Activated CD4-positive, alpha-beta T cell treated with anti-CD3 and anti-CD28 coated beads for 36 hours (primary cell): ENCODE measurements at regions of chr1 and their contacts with region 1.

Region 1: GRCh38 chr1:204806943-204807687 is 63.5 kb upstream of the NFASC start:
- DNase-seq: peak; percentile 92
- ATAC-seq: peak; percentile 96
- H3K4me3 Mint-ChIP-seq: peak overlapping the region; percentile 74
- H3K27ac Mint-ChIP-seq: peak overlapping the region; percentile 86
- H3K4me1 Mint-ChIP-seq: peaks cover 5% of the 10 kb centered on the region
- H3K27me3 Mint-ChIP-seq: no peaks in the 10 kb centered on the region

Region 2: DNA sequence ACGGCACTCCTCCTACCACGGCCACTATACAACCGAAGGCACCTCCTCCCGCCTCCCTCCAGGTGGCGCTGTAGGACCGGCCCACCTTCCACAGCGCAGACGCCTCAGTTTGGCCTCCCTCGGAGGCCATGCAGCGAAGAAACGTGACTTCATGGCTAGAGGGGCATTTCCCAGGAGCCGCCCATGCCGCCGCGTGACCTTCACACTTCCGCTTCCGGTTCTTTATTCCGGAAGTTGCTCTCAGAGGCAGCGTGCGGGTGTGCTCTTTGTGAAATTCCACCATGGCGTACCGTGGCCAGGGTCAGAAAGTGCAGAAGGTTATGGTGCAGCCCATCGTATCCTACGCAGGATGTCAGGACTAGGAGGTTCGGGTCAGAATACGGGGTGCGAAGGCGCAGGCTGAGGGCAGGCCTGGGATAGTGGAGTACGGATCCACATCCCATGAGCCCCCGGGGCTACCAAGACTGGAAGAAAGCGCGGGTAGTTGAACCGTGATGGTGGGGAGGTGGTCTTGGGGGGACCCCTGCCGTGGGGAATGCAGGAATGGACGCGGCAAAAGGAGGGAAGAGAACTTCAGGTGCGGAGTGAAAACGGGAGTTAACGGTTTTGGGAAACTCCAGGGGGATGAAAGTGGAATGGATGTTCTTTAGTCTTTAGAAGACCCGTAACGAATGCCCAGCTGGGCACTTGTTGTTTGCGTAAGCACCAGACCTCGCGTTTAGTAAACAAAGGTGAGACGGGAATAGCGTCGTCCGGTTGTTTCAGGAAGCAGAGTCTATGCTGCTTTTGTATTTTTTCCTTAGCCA is 945.5 kb before region 1 on chr1 and contains the start of gene SNRPE:
- CTCF ChIA-PET with region 1: interaction called, 3 read pairs
- POLR2A ChIA-PET with region 1: no interaction called
- intact Hi-C with region 1: loop called in 1 of 2 experiments (anchors 5 kb)
- DNase-seq: peak; percentile 98
- ATAC-seq: peak; percentile 98
- H3K4me3 Mint-ChIP-seq: peak within 1 kb of the TSS; percentile 100
- H3K27ac Mint-ChIP-seq: peak within 1 kb of the TSS; percentile 99
- H3K4me1 Mint-ChIP-seq: peaks cover 8% of the 10 kb centered on the region
- H3K27me3 Mint-ChIP-seq: no peaks in the 10 kb centered on the region
- total RNA-seq, gene SNRPE: 211 to 416 TPM

Region 3: GRCh38 chr1:204506961-204507387 is 300.1 kb before region 1 on chr1:
- CTCF ChIA-PET with region 1: interaction called, 17 read pairs
- POLR2A ChIA-PET with region 1: no interaction called
- intact Hi-C with region 1: loop called (anchors 1 to 5 kb)
- DNase-seq: peak; percentile 91
- ATAC-seq: peak; percentile 72
- H3K4me3 Mint-ChIP-seq: peak overlapping the region; percentile 89
- H3K27ac Mint-ChIP-seq: peak overlapping the region; percentile 99
- H3K4me1 Mint-ChIP-seq: peaks cover 28% of the 10 kb centered on the region
- H3K27me3 Mint-ChIP-seq: peaks cover 2% of the 10 kb centered on the region

Region 4: GRCh38 chr1:204560590-204561150 is 246.4 kb before region 1 on chr1:
- CTCF ChIA-PET with region 1: interaction called, 126 read pairs
- POLR2A ChIA-PET with region 1: interaction called, 4 read pairs
- intact Hi-C with region 1: loop called (anchors 1 kb)
- DNase-seq: no peak
- ATAC-seq: no peak
- H3K4me3 Mint-ChIP-seq: no peak overlapping the region
- H3K27ac Mint-ChIP-seq: peak overlapping the region; percentile 18
- H3K4me1 Mint-ChIP-seq: peaks cover 60% of the 10 kb centered on the region
- H3K27me3 Mint-ChIP-seq: no peaks in the 10 kb centered on the region

Region 5: DNA sequence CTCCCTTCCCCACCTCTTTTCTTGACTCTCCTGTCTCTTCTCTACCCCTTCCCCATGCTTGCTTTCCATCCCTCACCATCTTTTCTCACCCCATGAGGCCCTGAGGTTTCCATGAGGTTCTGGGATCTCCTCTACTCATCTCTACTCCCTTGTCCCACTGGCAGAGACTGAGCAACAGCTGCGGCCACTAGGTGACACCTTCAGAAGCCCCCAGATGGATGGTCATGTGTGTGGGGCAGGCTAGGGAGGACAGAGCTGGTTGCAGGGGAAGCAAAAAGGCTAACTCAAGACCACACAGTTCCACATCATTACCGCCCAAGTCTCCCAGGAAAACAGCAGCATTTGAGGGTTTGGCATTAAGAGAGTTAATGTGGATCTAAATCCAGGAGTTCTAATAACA is 166.5 kb before region 1 on chr1:
- CTCF ChIA-PET with region 1: interaction called, 20 read pairs
- POLR2A ChIA-PET with region 1: no interaction called
- intact Hi-C with region 1: no loop called
- DNase-seq: no peak
- ATAC-seq: no peak
- H3K4me3 Mint-ChIP-seq: no peak overlapping the region
- H3K27ac Mint-ChIP-seq: no peak overlapping the region
- H3K4me1 Mint-ChIP-seq: no peaks in the 10 kb centered on the region
- H3K27me3 Mint-ChIP-seq: peaks cover 8% of the 10 kb centered on the region

Region 6: GRCh38 chr1:204751894-204752687 is 55.0 kb before region 1 on chr1:
- CTCF ChIA-PET with region 1: interaction called, 24 read pairs
- POLR2A ChIA-PET with region 1: no interaction called
- intact Hi-C with region 1: no loop called
- DNase-seq: no peak
- ATAC-seq: no peak
- H3K4me3 Mint-ChIP-seq: no peak overlapping the region
- H3K27ac Mint-ChIP-seq: no peak overlapping the region
- H3K4me1 Mint-ChIP-seq: no peaks in the 10 kb centered on the region
- H3K27me3 Mint-ChIP-seq: no peaks in the 10 kb centered on the region

Region 7: GRCh38 chr1:204819495-204819894 is 12.4 kb after region 1 on chr1:
- CTCF ChIA-PET with region 1: interaction called, 53 read pairs
- POLR2A ChIA-PET with region 1: no interaction called
- intact Hi-C with region 1: no loop called
- DNase-seq: no peak
- ATAC-seq: no peak
- H3K4me3 Mint-ChIP-seq: no peak overlapping the region
- H3K27ac Mint-ChIP-seq: no peak overlapping the region
- H3K4me1 Mint-ChIP-seq: no peaks in the 10 kb centered on the region
- H3K27me3 Mint-ChIP-seq: peaks cover 8% of the 10 kb centered on the region